WTC11 (cell line): ENCODE measurements at regions of chr17 and their contacts with region 1.

Region 1: GRCh38 chr17:5793899-5794298 is 209.6 kb upstream of the NLRP1 start:
- DNase-seq: peak; percentile 41
- ATAC-seq: peak; percentile 77
- H3K4me3 Mint-ChIP-seq: no peak overlapping the region
- H3K27ac Mint-ChIP-seq: no peak overlapping the region
- H3K4me1 Mint-ChIP-seq: peaks cover 40% of the 10 kb centered on the region
- H3K27me3 Mint-ChIP-seq: peaks cover 5% of the 10 kb centered on the region; the same call in 1 of the 2 replicates
- CTCF ChIP-seq: peak; percentile 30; the same call in 1 of the 2 replicates

Region 2: GRCh38 chr17:5592382-5592781 is 201.5 kb before region 1 on chr17:
- CTCF ChIA-PET with region 1: interaction called, 16 read pairs
- POLR2A ChIA-PET with region 1: no interaction called
- DNase-seq: no peak
- ATAC-seq: peak; percentile 57
- H3K4me3 Mint-ChIP-seq: no peak overlapping the region
- H3K27ac Mint-ChIP-seq: no peak overlapping the region
- H3K4me1 Mint-ChIP-seq: no peaks in the 10 kb centered on the region
- H3K27me3 Mint-ChIP-seq: no peaks in the 10 kb centered on the region
- CTCF ChIP-seq: 0 out of 2 replicates have a peak, but pooled peaks have one; percentile 14

Region 3: DNA sequence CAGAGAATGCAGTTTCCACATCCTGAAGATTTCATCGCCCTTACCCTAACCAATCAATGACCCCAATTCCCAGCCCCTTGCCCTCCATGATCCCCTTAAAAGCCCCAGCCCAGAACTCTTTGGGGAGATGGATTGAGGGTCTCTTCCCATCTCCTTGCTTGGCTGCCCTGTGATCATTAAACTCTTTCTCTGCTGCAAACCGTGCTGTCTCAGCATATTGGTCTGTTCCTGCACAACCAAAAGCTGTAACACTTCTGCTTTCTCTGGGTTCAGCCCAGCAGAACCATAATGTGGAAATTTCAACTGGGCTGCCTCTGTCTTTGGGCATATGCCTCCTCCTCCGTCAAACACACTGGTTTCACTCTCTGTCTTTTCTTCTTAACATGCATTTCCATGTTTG is 142.6 kb before region 1 on chr17:
- CTCF ChIA-PET with region 1: no interaction called
- POLR2A ChIA-PET with region 1: no interaction called
- DNase-seq: no peak
- ATAC-seq: no peak
- H3K4me3 Mint-ChIP-seq: no peak overlapping the region
- H3K27ac Mint-ChIP-seq: no peak overlapping the region
- H3K4me1 Mint-ChIP-seq: peaks cover 6% of the 10 kb centered on the region; the same call in 1 of the 2 replicates
- H3K27me3 Mint-ChIP-seq: peaks cover 5% of the 10 kb centered on the region; the same call in 1 of the 2 replicates
- CTCF ChIP-seq: no peak

Region 4: GRCh38 chr17:5838646-5839300 is 44.9 kb after region 1 on chr17:
- CTCF ChIA-PET with region 1: interaction called, 13 read pairs
- POLR2A ChIA-PET with region 1: no interaction called
- DNase-seq: peak; percentile 48
- ATAC-seq: peak; percentile 80
- H3K4me3 Mint-ChIP-seq: no peak overlapping the region
- H3K27ac Mint-ChIP-seq: no peak overlapping the region
- H3K4me1 Mint-ChIP-seq: peaks cover 31% of the 10 kb centered on the region
- H3K27me3 Mint-ChIP-seq: no peaks in the 10 kb centered on the region
- CTCF ChIP-seq: no peak

Region 5: GRCh38 chr17:5919089-5919488 is 125.2 kb after region 1 on chr17:
- CTCF ChIA-PET with region 1: interaction called, 17 read pairs
- POLR2A ChIA-PET with region 1: no interaction called
- DNase-seq: peak; percentile 29
- ATAC-seq: peak; percentile 94
- H3K4me3 Mint-ChIP-seq: no peak overlapping the region
- H3K27ac Mint-ChIP-seq: peak overlapping the region; percentile 94
- H3K4me1 Mint-ChIP-seq: peaks cover 44% of the 10 kb centered on the region
- H3K27me3 Mint-ChIP-seq: no peaks in the 10 kb centered on the region; the same call in 1 of the 2 replicates
- CTCF ChIP-seq: no peak

Region 6: DNA sequence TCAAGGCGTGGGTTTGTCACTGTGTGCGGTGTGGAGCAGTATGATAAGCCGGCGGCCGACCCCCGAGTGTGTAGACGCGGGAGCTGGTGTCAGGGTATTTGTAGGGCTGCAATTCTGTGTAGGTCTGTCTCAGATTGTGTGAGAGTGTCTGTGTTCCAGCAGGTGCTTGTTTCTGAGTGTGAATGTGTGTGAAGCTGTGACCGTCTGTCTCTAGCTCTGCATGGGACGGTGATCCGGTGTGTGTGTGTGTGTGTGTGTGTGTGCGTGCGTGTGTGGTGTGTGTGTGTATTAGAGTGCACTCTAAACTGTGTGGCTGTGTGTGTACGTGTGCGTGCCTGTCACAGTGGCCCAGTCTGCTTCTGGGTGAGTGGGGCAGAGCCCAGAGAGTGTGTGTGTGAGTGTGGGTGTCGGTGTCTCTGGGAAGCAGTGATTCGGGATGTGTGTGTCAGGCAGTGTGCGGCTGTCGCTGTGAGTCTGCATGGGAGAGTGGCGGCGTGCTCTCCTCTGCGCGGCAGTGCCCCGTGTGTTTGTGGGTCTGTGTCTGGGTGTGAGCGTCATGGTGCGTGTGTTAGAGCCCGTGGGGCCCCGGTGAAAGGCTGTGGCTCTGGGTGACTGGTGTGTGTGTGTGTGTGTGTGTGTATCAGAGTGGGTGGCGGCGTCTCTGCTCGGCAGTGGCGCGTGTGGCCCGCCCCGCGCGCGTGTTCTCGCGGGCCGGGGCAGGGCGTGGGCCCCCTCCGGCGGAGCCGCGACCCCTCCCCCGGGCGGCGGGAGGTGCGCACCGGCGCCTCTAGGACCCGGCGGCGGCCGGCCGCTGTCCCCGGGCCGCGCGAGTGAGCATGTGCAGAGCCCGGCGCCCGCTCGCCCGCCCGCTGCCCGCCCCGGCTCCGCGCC is 275.9 kb after region 1 on chr17 and contains the start of gene WSCD1:
- CTCF ChIA-PET with region 1: interaction called, 33 read pairs
- POLR2A ChIA-PET with region 1: no interaction called
- DNase-seq: peak; percentile 33
- ATAC-seq: peak; percentile 33
- H3K4me3 Mint-ChIP-seq: peak within 1 kb of the TSS; percentile 90
- H3K27ac Mint-ChIP-seq: peak within 1 kb of the TSS; percentile 18; the same call in 1 of the 2 replicates
- H3K4me1 Mint-ChIP-seq: peaks cover 29% of the 10 kb centered on the region
- H3K27me3 Mint-ChIP-seq: peaks cover 16% of the 10 kb centered on the region
- CTCF ChIP-seq: no peak
- total RNA-seq, gene WSCD1: 57.5 to 80.2 TPM (median 71.9 TPM) in 3 replicates

Region 7: DNA sequence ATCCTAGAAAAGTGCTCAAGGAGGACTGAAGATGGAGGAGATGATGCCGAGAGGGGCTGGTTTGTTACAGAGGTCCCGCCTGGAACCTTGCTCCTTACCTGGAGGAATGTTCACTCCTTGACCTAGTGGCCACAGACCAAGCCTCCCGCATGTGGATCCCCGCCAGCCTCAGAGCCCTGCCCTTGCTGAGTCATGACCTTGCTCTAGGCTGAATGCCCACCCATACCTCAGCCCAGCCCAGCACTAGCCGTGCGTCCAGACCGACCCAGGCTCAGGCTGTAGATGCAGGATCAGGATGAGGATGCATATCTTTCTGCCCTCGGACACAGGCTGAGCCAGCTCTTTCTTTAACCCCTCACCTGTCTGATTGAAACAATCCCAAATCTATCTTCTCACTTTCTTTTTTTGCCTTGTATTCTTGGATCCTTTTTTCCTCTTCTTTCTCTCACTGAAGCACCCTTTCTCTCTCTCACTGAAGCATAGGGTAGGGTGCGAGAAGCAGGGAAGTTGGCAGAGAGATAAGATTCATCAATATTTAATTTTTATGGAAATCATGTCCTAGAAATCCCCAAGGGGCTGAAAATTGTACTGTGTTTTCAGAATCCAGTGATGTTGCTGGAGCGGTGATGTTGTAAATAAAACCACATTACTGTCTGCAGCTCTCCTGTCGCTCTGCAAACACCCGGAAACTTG is 311.2 kb after region 1 on chr17:
- CTCF ChIA-PET with region 1: no interaction called
- POLR2A ChIA-PET with region 1: no interaction called
- DNase-seq: no peak
- ATAC-seq: no peak
- H3K4me3 Mint-ChIP-seq: no peak overlapping the region
- H3K27ac Mint-ChIP-seq: peak overlapping the region; percentile 24
- H3K4me1 Mint-ChIP-seq: peaks cover 32% of the 10 kb centered on the region
- H3K27me3 Mint-ChIP-seq: no peaks in the 10 kb centered on the region
- CTCF ChIP-seq: no peak